IMR-90 (cell line): ENCODE measurements at regions of chr18 and their contacts with region 1.

Region 1: GRCh38 chr18:864872-865273 is 39.8 kb upstream of the ADCYAP1 start:
- DNase-seq: peak; percentile 70
- ATAC-seq: peak; percentile 99
- H3K4me3 ChIP-seq: no peak overlapping the region
- H3K27ac ChIP-seq: no peak overlapping the region
- H3K4me1 ChIP-seq: no peaks in the 10 kb centered on the region
- H3K27me3 ChIP-seq: peaks cover 6% of the 10 kb centered on the region
- CTCF ChIP-seq: peak; percentile 98
- POLR2A ChIP-seq: 0 out of 2 replicates have a peak, but pooled peaks have one; percentile 41
- RAD21 ChIP-seq: peak; percentile 97

Region 2: GRCh38 chr18:961644-962355 is 96.9 kb after region 1 on chr18:
- CTCF ChIA-PET with region 1: no interaction called
- POLR2A ChIA-PET with region 1: no interaction called
- dilution Hi-C with region 1: no loop called
- in situ Hi-C with region 1: no loop called
- intact Hi-C with region 1: loop called (anchors 2 kb)
- DNase-seq: peak; percentile 35
- ATAC-seq: peak; percentile 59
- H3K4me3 ChIP-seq: peak overlapping the region; percentile 44
- H3K27ac ChIP-seq: no peak overlapping the region
- H3K4me1 ChIP-seq: no peaks in the 10 kb centered on the region
- H3K27me3 ChIP-seq: no peaks in the 10 kb centered on the region
- CTCF ChIP-seq: peak; percentile 75
- POLR2A ChIP-seq: no peak
- RAD21 ChIP-seq: peak; percentile 39

Region 3: GRCh38 chr18:2223849-2224248 is 1359.0 kb after region 1 on chr18:
- CTCF ChIA-PET with region 1: interaction called, 3 read pairs
- POLR2A ChIA-PET with region 1: no interaction called
- dilution Hi-C with region 1: no loop called
- in situ Hi-C with region 1: no loop called
- intact Hi-C with region 1: loop called (anchors 5 kb)
- DNase-seq: peak; percentile 6
- ATAC-seq: peak; percentile 35; the same call in 1 of the 2 replicates
- H3K4me3 ChIP-seq: no peak overlapping the region
- H3K27ac ChIP-seq: no peak overlapping the region
- H3K4me1 ChIP-seq: no peaks in the 10 kb centered on the region
- H3K27me3 ChIP-seq: no peaks in the 10 kb centered on the region
- CTCF ChIP-seq: peak; percentile 45
- POLR2A ChIP-seq: no peak
- RAD21 ChIP-seq: peak; percentile 24; the same call in 1 of the 2 replicates

Region 4: DNA sequence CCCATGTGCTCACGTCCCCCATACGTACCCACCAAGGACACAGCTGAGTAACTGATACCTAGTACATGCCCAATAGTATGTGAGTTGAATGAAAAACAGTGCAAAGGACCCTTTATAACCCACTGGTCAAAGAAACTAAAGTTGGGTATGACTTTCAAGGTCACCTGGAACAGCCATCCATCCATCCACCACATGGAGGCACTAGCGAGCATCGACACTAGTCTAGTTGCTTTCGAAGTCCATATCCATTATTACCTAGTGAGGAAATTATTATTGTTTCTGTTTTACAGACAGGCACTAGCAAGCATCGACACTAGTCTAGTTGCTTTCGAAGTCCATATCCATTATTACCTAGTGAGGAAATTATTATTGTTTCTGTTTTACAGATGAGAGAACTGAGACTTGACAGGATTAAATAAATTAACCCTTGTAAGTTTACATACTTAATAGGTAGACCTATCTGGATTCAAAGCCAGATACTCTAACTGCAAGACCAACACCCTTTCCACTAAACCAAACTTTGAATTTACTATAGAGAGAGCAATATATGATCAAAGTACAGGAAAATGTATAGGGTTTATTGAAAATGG is 1472.8 kb after region 1 on chr18:
- CTCF ChIA-PET with region 1: no interaction called
- POLR2A ChIA-PET with region 1: no interaction called
- dilution Hi-C with region 1: no loop called
- in situ Hi-C with region 1: no loop called
- intact Hi-C with region 1: loop called (anchors 10 kb)
- DNase-seq: peak; percentile 50
- ATAC-seq: peak; percentile 79
- H3K4me3 ChIP-seq: no peak overlapping the region
- H3K27ac ChIP-seq: no peak overlapping the region
- H3K4me1 ChIP-seq: no peaks in the 10 kb centered on the region
- H3K27me3 ChIP-seq: peaks cover 3% of the 10 kb centered on the region
- CTCF ChIP-seq: peak; percentile 63
- POLR2A ChIP-seq: no peak
- RAD21 ChIP-seq: peak; percentile 66

Region 5: GRCh38 chr18:2547477-2548087 is 1682.7 kb after region 1 on chr18:
- CTCF ChIA-PET with region 1: no interaction called
- POLR2A ChIA-PET with region 1: no interaction called
- dilution Hi-C with region 1: no loop called
- in situ Hi-C with region 1: loop called (anchors 25 kb)
- intact Hi-C with region 1: loop called (anchors 2 kb)
- DNase-seq: peak; percentile 71
- ATAC-seq: peak; percentile 89
- H3K4me3 ChIP-seq: no peak overlapping the region
- H3K27ac ChIP-seq: no peak overlapping the region
- H3K4me1 ChIP-seq: no peaks in the 10 kb centered on the region
- H3K27me3 ChIP-seq: no peaks in the 10 kb centered on the region
- CTCF ChIP-seq: peak; percentile 66
- POLR2A ChIP-seq: no peak
- RAD21 ChIP-seq: peak; percentile 64

Region 6: DNA sequence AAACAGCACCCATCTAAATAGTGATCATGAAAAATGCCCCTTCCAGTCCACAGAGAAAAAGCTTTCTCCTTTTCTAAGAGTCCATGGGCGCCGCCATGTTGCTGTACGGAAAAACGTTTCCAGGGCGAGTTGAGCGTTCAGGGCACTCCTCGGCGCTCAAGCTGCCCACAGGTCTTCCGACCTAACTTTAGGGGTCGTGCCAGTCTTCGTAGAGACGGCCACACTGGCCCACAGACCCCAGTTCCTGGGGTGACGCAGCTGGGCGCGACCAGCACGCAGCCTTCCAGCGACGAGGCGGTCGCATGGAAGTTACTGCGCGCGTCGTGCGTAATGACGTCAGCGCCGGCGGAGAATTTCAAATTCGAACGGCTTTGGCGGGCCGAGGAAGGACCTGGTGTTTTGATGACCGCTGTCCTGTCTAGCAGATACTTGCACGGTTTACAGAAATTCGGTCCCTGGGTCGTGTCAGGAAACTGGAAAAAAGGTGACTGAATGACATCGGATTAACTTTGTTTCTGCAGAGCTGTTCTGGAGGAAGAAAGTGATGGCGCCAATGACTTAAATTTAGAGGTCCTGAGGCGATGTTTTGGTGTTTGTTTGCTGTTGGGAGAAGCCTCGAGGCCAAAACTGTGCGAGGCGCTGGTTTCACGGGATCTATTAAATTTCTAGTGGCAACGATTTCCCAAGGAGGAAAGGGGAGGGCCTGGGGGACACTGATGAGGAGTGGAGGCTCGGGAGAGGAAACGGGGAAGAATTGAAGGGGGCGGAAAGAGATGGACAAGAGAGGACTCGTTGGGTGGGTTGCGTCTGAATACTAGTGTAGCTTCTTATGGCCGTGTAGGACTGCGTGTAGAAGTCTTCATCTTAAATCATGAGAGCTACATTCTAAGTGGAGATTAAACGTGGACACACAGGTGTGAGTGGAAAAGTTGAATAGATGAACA is 1706.6 kb after region 1 on chr18 and contains the starts of genes METTL4 and NDC80:
- CTCF ChIA-PET with region 1: no interaction called
- POLR2A ChIA-PET with region 1: no interaction called
- dilution Hi-C with region 1: no loop called
- in situ Hi-C with region 1: loop called (anchors 25 kb)
- intact Hi-C with region 1: no loop called
- DNase-seq: peak; percentile 86
- ATAC-seq: peak; percentile 87
- H3K4me3 ChIP-seq: peak within 1 kb of the TSS; percentile 66
- H3K27ac ChIP-seq: peak within 1 kb of the TSS; percentile 91
- H3K4me1 ChIP-seq: peaks cover 5% of the 10 kb centered on the region
- H3K27me3 ChIP-seq: no peaks in the 10 kb centered on the region
- CTCF ChIP-seq: no peak
- POLR2A ChIP-seq: peak; percentile 69
- RAD21 ChIP-seq: no peak
- total RNA-seq, gene METTL4: 5.4 and 6.7 TPM in 2 replicates
- total RNA-seq, gene NDC80: 11.8 and 15.3 TPM in 2 replicates